Tibial artery (tissue), 4 donors: ENCODE measurements at regions of chr6 and their contacts with region 1.

Region 1: GRCh38 chr6:117555882-117556498 is 46.3 kb downstream of the GOPC start:
- DNase-seq: peak in 1 of 2 donors; percentile 57
- H3K4me3 ChIP-seq: no peak overlapping the region
- H3K27ac ChIP-seq: no peak overlapping the region
- H3K4me1 ChIP-seq: peaks cover 0 to 6% (median 0%) of the 10 kb centered on the region in 4 donors
- H3K27me3 ChIP-seq: no peaks in the 10 kb centered on the region
- CTCF ChIP-seq: peak; percentile 78 to 85

Region 2: DNA sequence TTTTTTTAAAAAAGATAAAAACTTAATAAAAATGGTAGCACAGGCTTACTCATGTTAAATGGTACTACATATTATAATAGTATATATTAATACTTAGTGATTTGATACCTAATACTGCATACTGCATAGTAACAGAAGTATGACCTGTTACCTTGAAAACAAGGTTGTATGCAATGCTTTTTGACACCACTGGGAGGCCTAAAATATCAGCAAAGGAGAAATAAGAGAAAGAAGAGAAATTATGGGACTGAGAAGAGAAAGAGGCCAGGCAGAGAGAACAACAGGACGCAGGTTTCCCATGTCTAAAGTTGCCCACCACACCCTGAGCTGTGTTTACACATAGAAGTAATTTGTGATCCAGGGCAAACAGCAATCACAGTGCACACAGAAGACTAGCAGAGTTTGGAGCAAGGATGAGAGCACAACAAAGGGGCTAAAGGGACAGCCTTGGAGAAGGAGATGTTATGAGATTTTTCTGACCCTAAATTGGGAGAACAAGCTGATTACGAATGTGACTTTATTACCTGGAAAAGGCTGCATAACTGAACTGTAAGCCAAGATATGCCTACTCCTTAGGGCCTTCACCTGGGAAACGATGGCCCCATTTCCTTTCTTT is 203.4 kb before region 1 on chr6:
- intact Hi-C with region 1: loop called (anchors 10 kb)
- DNase-seq: no peak
- H3K4me3 ChIP-seq: no peak overlapping the region
- H3K27ac ChIP-seq: no peak overlapping the region
- H3K4me1 ChIP-seq: no peaks in the 10 kb centered on the region
- H3K27me3 ChIP-seq: no peaks in the 10 kb centered on the region
- CTCF ChIP-seq: no peak

Region 3: DNA sequence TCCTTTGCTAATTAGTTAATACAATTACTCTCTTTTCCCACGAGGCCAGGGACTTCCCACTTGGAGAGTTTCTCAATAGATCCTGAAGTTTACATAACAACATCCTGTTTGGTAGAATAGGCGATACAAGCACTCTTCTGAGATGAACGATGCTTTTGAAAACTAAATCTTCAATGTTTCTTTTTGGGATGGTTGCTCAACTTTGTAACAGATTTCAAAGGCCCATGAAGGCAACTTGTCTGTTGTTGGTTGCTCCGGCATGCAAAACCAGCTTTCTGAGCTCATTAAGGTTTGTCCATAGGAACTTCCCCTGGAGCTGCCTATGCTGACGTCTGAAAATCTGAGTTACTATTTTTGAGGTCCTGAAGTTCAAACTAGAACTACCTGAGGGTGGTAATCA is 104.3 kb before region 1 on chr6:
- intact Hi-C with region 1: loop called (anchors 1 kb)
- DNase-seq: no peak
- H3K4me3 ChIP-seq: no peak overlapping the region
- H3K27ac ChIP-seq: no peak overlapping the region
- H3K4me1 ChIP-seq: peaks cover 0 to 15% (median 0%) of the 10 kb centered on the region in 4 donors
- H3K27me3 ChIP-seq: no peaks in the 10 kb centered on the region
- CTCF ChIP-seq: no peak